ENCODE measurements at regions of chr5 and their contacts with region 1.

Region 1: GRCh38 chr5:134904630-134905245 is at the start of gene PCBD2:
- DNase-seq: peak; percentile 89
- H3K4me3 ChIP-seq: peak within 1 kb of the TSS; percentile 60 to 90 (median 80)
- H3K27ac ChIP-seq: peak within 1 kb of the TSS; percentile 80
- H3K4me1 ChIP-seq: no peaks in the 10 kb centered on the region
- H3K27me3 ChIP-seq: no peaks in the 10 kb centered on the region
- CTCF ChIP-seq: peak; percentile 74 to 95
- total RNA-seq, gene PCBD2: 4.5 to 8.3 TPM

Region 2: DNA sequence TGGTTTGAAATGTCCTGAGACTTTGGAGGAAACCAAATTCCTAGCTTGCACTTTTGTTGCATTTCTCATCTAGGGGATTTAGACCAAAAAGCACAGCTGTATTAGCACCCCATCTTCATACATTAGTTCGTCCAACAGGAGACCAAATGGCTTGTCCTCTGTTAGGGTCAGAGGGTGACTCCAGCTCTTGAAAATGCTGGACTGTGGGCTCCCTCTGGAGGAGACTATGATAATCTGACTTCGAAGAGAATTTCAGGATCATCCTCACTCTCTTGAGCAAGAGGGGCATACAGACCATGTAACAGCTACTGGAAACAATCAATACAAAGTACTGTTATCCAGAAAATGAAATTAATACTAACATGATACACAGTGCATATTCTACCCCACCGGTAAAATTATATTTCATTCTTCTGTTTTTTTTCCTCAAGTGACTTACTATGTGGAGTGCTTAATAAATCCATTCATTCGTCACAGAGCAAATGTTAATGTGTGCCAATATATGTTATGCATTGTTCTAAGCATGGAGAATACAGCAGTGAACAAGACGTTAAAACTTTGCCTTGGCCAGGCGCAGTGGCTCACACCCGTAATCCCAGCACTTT is 615.1 kb before region 1 on chr5:
- CTCF ChIA-PET with region 1: no interaction called
- dilution Hi-C with region 1: no loop called
- in situ Hi-C with region 1: no loop called
- intact Hi-C with region 1: loop called (anchors 10 kb)
- DNase-seq: peak; percentile 52
- H3K4me3 ChIP-seq: no peak overlapping the region
- H3K27ac ChIP-seq: no peak overlapping the region
- H3K4me1 ChIP-seq: no peaks in the 10 kb centered on the region
- H3K27me3 ChIP-seq: no peaks in the 10 kb centered on the region
- CTCF ChIP-seq: peak; percentile 76 to 78

Region 3: DNA sequence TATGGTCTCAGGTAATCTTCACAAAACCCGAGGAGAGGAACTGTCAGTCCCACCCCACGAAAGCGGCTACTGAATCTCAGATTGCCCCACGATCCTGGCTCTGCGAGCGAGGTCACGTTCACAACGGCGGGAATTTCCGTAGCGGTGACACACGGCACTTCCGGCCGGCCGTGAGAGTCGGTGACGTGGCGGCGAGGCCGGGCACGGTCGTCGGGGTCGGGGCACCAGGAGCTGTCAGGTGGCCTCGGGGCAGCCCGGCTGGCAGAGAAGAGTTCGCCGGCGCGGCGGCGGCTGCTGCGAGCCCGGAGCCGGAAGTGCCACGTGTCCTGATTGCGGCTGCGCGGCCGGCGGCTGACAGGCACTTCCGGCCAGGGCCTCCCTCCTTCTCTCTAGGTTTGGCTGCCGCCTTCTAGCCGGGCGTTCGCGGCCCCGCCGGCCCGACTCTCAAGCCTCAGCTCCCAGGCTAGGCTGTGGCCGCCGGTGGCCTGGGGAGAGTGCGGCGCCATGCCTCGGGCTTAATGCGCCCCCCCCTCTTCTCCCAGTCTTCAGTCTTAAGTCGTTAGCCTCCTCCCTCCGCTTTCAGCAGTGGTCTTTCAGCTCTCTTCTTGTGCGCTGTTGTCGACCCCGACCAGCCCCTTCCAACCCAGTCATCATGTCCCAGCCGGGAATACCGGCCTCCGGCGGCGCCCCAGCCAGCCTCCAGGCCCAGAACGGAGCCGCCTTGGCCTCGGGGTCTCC is 256.1 kb before region 1 on chr5 and contains the start of gene SEC24A:
- CTCF ChIA-PET with region 1: no interaction called
- dilution Hi-C with region 1: no loop called
- in situ Hi-C with region 1: no loop called
- intact Hi-C with region 1: loop called (anchors 1 kb)
- DNase-seq: peak; percentile 96
- H3K4me3 ChIP-seq: peak within 1 kb of the TSS; percentile 90 to 100 (median 99)
- H3K27ac ChIP-seq: peak within 1 kb of the TSS; percentile 98
- H3K4me1 ChIP-seq: no peaks in the 10 kb centered on the region
- H3K27me3 ChIP-seq: no peaks in the 10 kb centered on the region
- CTCF ChIP-seq: no peak
- total RNA-seq, gene SEC24A: 20.4 to 20.8 TPM

Region 4: GRCh38 chr5:134784241-134784920 is 120.4 kb before region 1 on chr5:
- CTCF ChIA-PET with region 1: no interaction called
- dilution Hi-C with region 1: no loop called
- in situ Hi-C with region 1: no loop called
- intact Hi-C with region 1: loop called (anchors 1 kb)
- DNase-seq: no peak
- H3K4me3 ChIP-seq: no peak overlapping the region
- H3K27ac ChIP-seq: no peak overlapping the region
- H3K4me1 ChIP-seq: no peaks in the 10 kb centered on the region
- H3K27me3 ChIP-seq: no peaks in the 10 kb centered on the region
- CTCF ChIP-seq: peak in 1 of 2 donors; percentile 29

Region 5: GRCh38 chr5:134845852-134846640 is 58.7 kb before region 1 on chr5 and contains the start of gene C5orf24:
- CTCF ChIA-PET with region 1: no interaction called
- dilution Hi-C with region 1: no loop called
- in situ Hi-C with region 1: no loop called
- intact Hi-C with region 1: loop called (anchors 2 kb)
- DNase-seq: peak; percentile 93
- H3K4me3 ChIP-seq: peak within 1 kb of the TSS; percentile 53 to 92 (median 63)
- H3K27ac ChIP-seq: peak within 1 kb of the TSS; percentile 79
- H3K4me1 ChIP-seq: peaks cover 13% of the 10 kb centered on the region
- H3K27me3 ChIP-seq: no peaks in the 10 kb centered on the region
- CTCF ChIP-seq: no peak
- total RNA-seq, gene C5orf24: 40.3 to 44.1 TPM

Region 6: DNA sequence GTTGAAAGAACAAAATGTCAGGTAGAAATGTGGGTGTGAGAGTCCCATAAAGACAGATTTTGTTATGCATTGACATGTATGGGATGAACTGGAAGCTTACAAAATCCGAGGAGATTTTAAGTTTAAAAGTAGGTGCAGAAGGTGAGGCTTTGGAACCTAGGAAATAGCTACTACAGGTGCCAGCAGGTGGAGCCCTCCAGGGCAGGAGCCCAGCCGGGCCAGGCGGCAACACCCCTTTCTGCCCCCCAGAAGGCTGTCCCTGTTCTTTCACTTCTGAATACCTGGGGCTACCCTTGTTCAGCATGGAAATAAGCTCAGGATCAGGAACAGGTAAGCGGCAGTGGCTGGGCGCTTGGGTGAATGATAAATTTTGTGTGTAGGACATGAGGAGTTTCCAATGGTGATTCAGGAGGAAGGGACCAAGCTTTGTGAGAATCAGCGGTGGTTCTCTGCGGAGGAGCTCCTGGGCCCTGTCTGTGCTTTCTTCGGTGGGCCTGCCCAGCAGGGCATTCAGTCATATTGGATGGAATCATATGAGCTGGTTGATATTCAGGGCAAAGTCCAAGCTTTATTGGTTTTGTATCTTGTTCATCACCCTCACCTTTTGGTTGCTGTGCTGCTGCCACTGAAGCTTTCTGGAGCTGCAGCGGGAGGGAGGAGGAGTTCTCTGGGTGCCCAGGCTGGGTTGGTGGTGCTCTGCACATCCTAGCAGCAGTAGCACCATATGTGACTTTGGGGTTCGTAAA is 12.5 kb after region 1 on chr5:
- CTCF ChIA-PET with region 1: interaction called, 40 read pairs
- dilution Hi-C with region 1: no loop called
- in situ Hi-C with region 1: no loop called
- intact Hi-C with region 1: no loop called
- DNase-seq: no peak
- H3K4me3 ChIP-seq: no peak overlapping the region
- H3K27ac ChIP-seq: no peak overlapping the region
- H3K4me1 ChIP-seq: peaks cover 2% of the 10 kb centered on the region
- H3K27me3 ChIP-seq: no peaks in the 10 kb centered on the region
- CTCF ChIP-seq: peak; percentile 26 to 57

Region 7: DNA sequence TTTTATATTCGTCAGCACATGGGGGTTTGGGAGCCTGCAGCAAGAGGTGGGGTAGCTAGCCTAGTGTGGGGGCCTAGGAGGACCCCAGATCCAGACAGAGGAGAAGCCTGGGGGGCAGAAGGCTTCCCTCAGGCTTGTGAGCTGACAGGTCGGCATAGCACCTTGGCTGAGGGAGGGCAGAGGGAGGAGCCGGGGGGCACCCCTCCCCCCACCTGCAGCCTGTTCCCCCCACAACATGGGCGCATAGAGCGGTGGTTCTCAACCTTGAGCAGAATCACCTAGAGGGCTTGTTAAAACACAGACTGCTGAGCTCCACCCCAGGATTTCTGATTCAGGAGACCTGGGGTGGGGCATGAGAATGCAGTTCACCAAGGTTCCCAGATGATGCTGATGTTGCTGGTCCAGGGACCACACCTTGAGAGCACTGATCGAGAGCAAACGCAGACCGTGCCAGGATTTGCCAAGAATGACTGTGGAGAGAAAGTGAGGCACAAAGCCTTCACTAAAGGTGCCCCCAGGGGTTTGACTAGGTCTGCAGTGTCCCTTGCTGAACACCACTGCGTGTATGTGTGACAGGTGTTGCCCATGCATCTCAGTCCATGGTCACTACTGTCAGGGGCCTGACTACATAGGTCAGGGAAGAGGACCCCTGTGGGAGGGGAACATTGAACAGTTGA is 331.0 kb after region 1 on chr5:
- CTCF ChIA-PET with region 1: interaction called, 21 read pairs
- dilution Hi-C with region 1: no loop called
- in situ Hi-C with region 1: no loop called
- intact Hi-C with region 1: no loop called
- DNase-seq: no peak
- H3K4me3 ChIP-seq: no peak overlapping the region
- H3K27ac ChIP-seq: no peak overlapping the region
- H3K4me1 ChIP-seq: peaks cover 21% of the 10 kb centered on the region
- H3K27me3 ChIP-seq: no peaks in the 10 kb centered on the region
- CTCF ChIP-seq: no peak

Measured in mammary epithelial cell (primary cell).